ENCODE measurements at regions of chr17 and their contacts with region 1.

Region 1: DNA sequence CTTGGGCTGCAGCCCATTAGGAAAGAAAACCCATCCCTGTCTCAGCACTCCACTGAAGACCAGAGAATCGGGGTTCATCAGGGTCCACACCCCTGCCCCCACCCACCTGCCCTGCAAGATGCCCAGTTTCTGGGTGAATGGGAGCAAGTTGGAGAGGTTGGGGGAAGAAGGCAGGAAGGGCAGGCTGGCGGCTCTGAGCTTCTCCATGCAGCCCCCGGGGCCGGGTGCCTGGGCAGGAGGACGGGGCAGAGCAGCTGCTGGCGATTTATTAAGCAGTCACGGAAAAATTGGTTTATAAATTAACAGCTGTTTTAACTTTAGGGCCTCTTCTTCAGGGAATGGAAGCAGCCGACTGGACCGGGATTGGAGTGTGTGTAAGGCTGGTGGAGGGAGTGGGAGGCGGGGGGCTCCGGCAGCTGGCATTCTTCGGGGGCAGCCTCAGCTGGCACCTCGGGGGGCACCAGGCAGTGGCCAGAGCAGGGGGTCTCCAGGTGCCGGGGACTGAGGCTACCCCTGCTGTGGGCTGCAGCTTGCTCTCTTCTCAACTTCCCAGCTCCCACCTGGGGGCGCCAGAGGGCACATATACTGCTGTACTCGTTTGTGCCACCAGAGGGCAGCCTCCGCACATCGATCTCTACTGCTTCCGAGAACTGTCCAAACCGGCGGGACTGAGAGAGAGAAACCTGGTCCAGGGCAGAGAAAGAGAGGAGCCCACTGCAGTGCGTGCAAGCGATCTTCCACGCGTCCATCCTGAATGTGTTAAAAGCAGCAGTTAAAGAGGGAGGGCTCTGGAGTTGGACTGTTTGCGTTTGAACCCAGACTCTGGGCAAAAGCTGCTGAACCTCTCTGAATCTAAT is 5.0 kb upstream of the PPP1R1B start:
- DNase-seq: peak; percentile 88
- H3K4me3 Mint-ChIP-seq: peak overlapping the region; percentile 57
- H3K27ac Mint-ChIP-seq: peak overlapping the region; percentile 76
- H3K4me1 Mint-ChIP-seq: peaks cover 31% of the 10 kb centered on the region
- H3K27me3 Mint-ChIP-seq: peaks cover 52% of the 10 kb centered on the region

Region 2: DNA sequence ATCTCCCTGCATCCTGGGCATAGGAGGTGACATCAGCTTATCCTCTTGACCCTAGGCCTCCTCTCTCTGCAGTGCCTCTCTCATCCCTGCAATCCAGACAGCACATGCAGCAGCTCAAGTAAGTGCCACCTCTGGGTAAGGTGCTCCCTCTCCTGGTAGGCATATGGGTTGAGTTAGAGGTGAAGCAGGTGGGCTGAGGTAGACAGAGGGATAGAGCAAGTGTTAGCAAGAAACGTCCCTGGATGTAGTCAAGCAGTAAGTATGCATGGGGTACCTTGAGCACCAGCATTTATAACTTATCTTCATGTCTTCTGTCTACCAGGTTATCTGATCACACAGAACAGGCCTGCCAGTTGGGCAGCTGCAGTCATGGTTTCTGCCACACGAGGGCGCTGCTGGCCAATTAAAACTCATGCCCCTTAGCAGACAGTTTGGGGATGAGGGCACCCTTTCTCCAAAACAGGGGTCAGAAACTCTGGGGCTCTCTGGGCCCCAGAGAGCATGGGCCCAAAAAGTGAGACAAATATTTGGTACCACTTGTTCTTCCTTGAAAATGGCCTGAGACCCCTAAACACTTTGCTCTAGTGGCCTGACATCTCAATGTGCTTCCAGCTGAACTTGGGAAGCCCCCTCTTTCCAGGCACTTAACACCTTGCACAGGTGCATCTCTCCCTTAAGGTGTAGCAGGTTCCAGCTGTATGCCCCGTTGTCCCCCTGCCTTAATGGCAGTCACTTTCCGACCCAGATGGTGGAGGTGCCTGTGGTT is 73.9 kb before region 1 on chr17:
- CTCF ChIA-PET with region 1: interaction called, 45 read pairs
- POLR2A ChIA-PET with region 1: no interaction called
- DNase-seq: peak; percentile 74
- H3K4me3 Mint-ChIP-seq: no peak overlapping the region
- H3K27ac Mint-ChIP-seq: no peak overlapping the region
- H3K4me1 Mint-ChIP-seq: no peaks in the 10 kb centered on the region
- H3K27me3 Mint-ChIP-seq: no peaks in the 10 kb centered on the region

Region 3: DNA sequence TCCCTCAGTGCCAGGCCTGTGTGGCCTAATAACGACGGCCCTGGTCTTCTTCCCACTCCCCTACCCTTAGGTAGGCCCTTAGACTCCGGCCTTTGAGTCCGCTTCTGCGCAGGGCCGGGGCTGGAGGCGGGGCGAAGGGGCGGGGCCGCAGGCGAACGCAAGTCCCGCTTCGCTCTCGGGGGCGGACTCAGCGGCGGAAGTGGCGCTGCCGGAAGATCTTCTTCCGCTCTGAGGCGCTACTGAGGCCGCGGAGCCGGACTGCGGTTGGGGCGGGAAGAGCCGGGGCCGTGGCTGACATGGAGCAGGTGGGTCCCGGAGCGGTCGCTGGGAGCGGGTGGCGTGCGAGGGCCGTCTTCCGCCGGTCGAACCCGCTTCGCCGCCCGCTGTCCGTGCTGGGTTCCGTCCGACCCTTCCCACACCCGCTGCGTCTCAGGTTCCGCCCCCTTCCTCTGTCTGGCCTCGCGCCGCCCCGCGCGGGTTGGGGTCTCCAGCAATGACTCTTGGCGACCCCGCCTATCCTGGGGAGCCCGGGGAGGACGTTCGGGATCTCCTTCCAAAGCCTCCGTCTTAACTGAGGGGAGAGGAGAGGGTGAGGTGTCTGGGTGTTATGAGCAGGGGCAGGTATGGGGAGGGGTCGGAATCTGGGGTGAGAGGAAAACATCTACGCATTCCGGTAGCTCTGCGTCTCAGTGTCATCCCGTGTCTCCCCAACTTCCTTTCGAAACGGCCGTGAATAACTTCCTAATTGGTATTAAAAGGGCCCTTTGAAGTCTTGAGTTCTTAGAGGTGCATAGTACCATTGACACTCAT is 15.4 kb after region 1 on chr17 and contains the start of gene STARD3:
- CTCF ChIA-PET with region 1: interaction called, 108 read pairs
- POLR2A ChIA-PET with region 1: interaction called, 3 read pairs
- DNase-seq: peak; percentile 91
- H3K4me3 Mint-ChIP-seq: peak within 1 kb of the TSS; percentile 91
- H3K27ac Mint-ChIP-seq: peak within 1 kb of the TSS; percentile 89
- H3K4me1 Mint-ChIP-seq: peaks cover 52% of the 10 kb centered on the region
- H3K27me3 Mint-ChIP-seq: no peaks in the 10 kb centered on the region
- total RNA-seq, gene STARD3: 70.0 to 72.8 TPM

Region 4: GRCh38 chr17:39668199-39668966 is 46.6 kb after region 1 on chr17 and contains the start of gene PNMT:
- CTCF ChIA-PET with region 1: interaction called, 12 read pairs
- POLR2A ChIA-PET with region 1: interaction called, 4 read pairs
- DNase-seq: peak; percentile 72
- H3K4me3 Mint-ChIP-seq: no peak within 1 kb of the TSS
- H3K27ac Mint-ChIP-seq: peak within 1 kb of the TSS; percentile 81
- H3K4me1 Mint-ChIP-seq: peaks cover 6% of the 10 kb centered on the region
- H3K27me3 Mint-ChIP-seq: peaks cover 28% of the 10 kb centered on the region
- total RNA-seq, gene PNMT: 0.19 TPM in 1 of 2 experiments, not detected in the other

Region 5: DNA sequence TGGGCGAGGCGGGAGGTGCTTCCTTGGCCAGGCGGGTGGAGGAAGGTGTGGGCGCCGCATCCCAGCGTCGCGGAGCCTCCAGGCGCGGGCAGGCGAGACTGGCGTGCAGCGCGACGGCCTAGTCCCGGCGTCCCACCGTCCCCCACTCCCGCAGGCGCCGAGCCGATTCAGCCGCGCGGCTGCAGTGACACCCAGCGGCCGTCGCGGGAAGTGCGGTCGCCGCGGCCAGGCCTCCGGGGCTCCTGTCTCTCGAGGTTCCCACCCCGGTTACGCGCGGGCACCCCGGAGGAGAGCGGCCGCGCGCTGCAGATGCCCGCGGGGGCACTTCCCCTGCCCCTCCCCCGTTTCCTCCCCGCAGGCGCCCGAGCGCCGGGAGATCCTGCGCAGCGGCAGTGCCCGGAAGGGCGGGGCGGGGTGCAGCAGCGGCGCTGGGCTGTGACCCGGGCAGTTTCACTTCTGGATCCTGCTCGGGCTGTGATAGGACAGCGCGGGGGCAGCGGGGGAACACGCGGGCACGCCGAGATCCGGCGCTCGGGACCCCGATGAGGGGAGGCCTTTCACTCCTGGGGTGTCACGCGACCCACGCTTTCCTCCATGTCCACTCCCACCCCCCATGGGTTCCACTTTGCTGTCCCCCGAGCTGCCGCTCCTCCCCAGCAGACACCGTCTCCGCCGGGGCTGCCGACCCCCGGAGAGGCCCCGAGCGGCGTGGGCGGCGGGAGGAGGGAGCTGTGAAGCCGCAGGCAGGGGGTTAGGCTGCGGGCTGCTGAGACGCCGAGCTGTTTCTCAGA is 132.6 kb after region 1 on chr17:
- CTCF ChIA-PET with region 1: interaction called, 12 read pairs
- POLR2A ChIA-PET with region 1: no interaction called
- DNase-seq: peak; percentile 97
- H3K4me3 Mint-ChIP-seq: peak overlapping the region; percentile 75
- H3K27ac Mint-ChIP-seq: peak overlapping the region; percentile 94
- H3K4me1 Mint-ChIP-seq: peaks cover 60% of the 10 kb centered on the region
- H3K27me3 Mint-ChIP-seq: no peaks in the 10 kb centered on the region

Measured in activated CD4-positive, alpha-beta T cell treated with anti-CD3 and anti-CD28 coated beads, Interleukin-2, amount 10 ng/mL, durations not matched to agents 7 days and 5 days (primary cell).